Psoas muscle (tissue), 8 donors: ENCODE measurements at regions of chr3 and their contacts with region 1.

Region 1: DNA sequence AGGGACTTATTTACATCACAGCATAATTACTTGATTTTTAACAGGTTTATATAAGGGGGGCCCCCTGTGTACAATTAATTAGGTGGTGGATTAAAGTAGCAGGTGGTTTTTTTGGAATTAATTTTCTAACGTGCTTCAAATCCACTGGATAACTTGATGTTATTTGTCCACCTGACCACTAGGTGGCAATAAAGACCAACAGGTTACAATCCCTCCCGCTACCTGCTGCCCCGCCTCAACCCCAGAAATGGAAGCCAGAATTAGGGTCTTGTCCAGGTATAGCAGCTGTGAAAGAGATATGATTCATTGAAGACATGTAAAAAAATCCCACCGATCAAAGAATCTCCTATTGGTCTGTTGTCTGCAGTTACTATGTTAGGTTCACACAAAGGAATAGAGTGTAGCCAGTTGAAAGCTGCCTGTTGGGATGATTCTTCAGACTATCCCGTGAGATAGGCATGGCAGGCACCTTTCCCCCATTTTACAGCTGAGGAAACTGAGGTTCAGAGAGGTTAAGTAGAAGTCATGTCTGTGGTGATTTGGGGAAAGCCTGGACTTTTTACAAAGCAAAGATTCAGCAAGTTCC is 44.0 kb downstream of the MFSD1 start:
- DNase-seq: no peak
- ATAC-seq: peak in 2 of 4 donors; percentile 49 to 67
- H3K4me3 ChIP-seq: no peak overlapping the region
- H3K27ac ChIP-seq: no peak overlapping the region
- H3K4me1 ChIP-seq: no peaks in the 10 kb centered on the region
- H3K27me3 ChIP-seq: no peaks in the 10 kb centered on the region
- CTCF ChIP-seq: peak; percentile 70

Region 2: DNA sequence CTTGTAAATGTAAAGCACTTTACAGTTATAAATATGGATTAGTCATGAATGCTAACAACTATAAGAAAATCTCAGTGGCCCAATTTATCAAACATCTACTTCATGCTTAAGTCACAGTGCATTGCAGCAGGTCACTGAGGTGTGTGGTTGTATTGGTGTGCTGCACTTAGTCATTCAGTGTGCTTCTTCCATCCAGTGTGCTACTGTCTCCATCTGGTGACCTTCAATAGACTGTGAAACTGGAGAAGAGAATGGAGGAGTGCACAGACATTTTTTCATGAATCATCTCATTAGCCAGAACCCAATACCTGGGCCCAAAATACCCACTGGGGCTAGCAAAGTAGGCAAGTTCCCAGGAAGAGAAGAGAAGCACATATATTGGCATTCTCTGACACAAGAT is 939.2 kb before region 1 on chr3:
- intact Hi-C with region 1: no loop called
- DNase-seq: no peak
- ATAC-seq: peak in 3 of 4 donors; percentile 48 to 73 (median 51)
- H3K4me3 ChIP-seq: no peak overlapping the region
- H3K27ac ChIP-seq: no peak overlapping the region
- H3K4me1 ChIP-seq: no peaks in the 10 kb centered on the region
- H3K27me3 ChIP-seq: peaks cover 0 to under 1% (median 0%) of the 10 kb centered on the region in 3 donors
- CTCF ChIP-seq: no peak

Region 3: DNA sequence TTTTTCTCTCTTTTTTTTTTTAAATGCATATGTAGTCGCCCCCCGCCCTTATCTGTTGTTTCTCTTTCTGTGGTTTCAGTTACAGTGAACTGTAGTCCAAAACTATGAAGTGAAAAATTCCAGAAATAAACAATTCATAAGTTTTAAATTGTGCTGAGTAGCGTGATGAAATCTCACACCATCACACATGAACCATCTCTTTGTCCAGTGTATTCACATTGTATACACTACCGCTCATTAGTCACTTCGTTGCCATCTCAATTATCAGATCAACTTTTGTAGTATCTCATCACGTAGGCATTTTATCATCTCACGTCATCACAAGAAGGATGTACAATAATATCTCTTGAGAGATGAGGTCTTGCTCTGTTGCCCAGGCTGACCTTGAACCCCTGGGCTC is 337.4 kb before region 1 on chr3:
- intact Hi-C with region 1: no loop called
- DNase-seq: no peak
- ATAC-seq: no peak
- H3K4me3 ChIP-seq: no peak overlapping the region
- H3K27ac ChIP-seq: no peak overlapping the region
- H3K4me1 ChIP-seq: no peaks in the 10 kb centered on the region
- H3K27me3 ChIP-seq: no peaks in the 10 kb centered on the region
- CTCF ChIP-seq: no peak

Region 4: GRCh38 chr3:159260049-159260662 is 414.3 kb after region 1 on chr3:
- intact Hi-C with region 1: loop called (anchors 1 to 5 kb)
- DNase-seq: no peak
- ATAC-seq: peak in 2 of 4 donors; percentile 50 to 74
- H3K4me3 ChIP-seq: no peak overlapping the region
- H3K27ac ChIP-seq: no peak overlapping the region
- H3K4me1 ChIP-seq: no peaks in the 10 kb centered on the region
- H3K27me3 ChIP-seq: no peaks in the 10 kb centered on the region
- CTCF ChIP-seq: peak; percentile 83